ENCODE measurements at regions of chr13 and their contacts with region 1.

Region 1: GRCh38 chr13:93309886-93310523 is 83.4 kb downstream of the GPC6 start:
- DNase-seq: peak; percentile 51
- ATAC-seq: no peak
- H3K4me3 ChIP-seq: no peak overlapping the region
- H3K27ac ChIP-seq: no peak overlapping the region
- H3K4me1 ChIP-seq: peaks cover 2% of the 10 kb centered on the region; the same call in 1 of the 2 replicates
- H3K27me3 ChIP-seq: no peaks in the 10 kb centered on the region
- CTCF ChIP-seq: no peak
- POLR2A ChIP-seq: no peak
- RAD21 ChIP-seq: no peak

Region 2: DNA sequence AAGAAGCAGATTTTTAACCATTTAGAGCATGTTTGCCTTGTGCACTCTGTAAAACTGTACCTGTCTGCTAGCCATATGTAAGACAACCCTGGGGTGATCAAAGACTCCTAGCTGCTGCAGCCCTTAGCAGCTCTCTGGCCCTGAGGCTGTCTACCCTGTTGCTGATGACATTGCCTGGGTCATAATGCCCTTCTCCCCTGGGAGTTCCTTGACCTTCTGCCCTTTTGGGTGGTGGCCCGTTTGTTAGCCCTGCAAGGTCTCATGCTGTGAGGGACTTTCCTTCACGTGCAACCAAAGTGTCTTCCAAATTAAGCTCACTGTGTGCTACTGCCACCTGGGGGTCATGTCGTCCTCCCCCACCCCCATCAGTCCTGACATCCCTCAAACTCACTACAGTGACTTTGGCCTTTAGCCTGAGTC is 76.0 kb before region 1 on chr13:
- CTCF ChIA-PET with region 1: no interaction called
- POLR2A ChIA-PET with region 1: no interaction called
- dilution Hi-C with region 1: no loop called
- in situ Hi-C with region 1: no loop called
- intact Hi-C with region 1: no loop called
- DNase-seq: no peak
- ATAC-seq: no peak
- H3K4me3 ChIP-seq: no peak overlapping the region
- H3K27ac ChIP-seq: no peak overlapping the region
- H3K4me1 ChIP-seq: peaks cover 5% of the 10 kb centered on the region
- H3K27me3 ChIP-seq: no peaks in the 10 kb centered on the region
- CTCF ChIP-seq: no peak
- POLR2A ChIP-seq: no peak
- RAD21 ChIP-seq: no peak

Region 3: GRCh38 chr13:93248627-93249047 is 61.4 kb before region 1 on chr13:
- CTCF ChIA-PET with region 1: no interaction called
- POLR2A ChIA-PET with region 1: no interaction called
- dilution Hi-C with region 1: no loop called
- in situ Hi-C with region 1: no loop called
- intact Hi-C with region 1: loop called (anchors 10 kb)
- DNase-seq: peak; percentile 35
- ATAC-seq: no peak
- H3K4me3 ChIP-seq: no peak overlapping the region
- H3K27ac ChIP-seq: peak overlapping the region; percentile 38
- H3K4me1 ChIP-seq: peaks cover 14% of the 10 kb centered on the region
- H3K27me3 ChIP-seq: no peaks in the 10 kb centered on the region
- CTCF ChIP-seq: no peak; the same call in 1 of the 2 replicates
- POLR2A ChIP-seq: no peak
- RAD21 ChIP-seq: peak; percentile 49

Region 4: DNA sequence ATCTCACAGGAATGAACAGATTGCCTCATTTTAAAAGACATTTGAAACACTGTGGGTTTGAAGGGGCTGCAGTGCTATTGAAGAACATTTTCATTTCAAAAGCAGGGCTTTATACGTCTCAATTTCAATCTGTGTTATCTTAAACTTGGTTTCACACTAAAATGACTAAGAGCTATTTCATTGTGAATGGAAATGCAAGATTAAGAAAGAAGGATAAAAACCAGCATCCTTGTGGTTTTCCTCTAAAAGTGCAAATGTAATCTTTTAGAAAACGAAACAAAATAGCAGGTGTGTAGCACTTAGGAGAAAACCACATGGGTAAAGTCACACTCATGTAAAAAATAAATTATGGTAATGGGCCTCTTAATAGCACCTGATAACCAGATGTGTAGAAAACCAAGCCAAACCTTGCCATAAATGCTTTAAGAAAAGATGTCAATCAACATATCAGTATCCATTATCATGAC is 314.3 kb after region 1 on chr13:
- CTCF ChIA-PET with region 1: no interaction called
- POLR2A ChIA-PET with region 1: no interaction called
- dilution Hi-C with region 1: no loop called
- in situ Hi-C with region 1: no loop called
- intact Hi-C with region 1: no loop called
- DNase-seq: no peak
- ATAC-seq: no peak
- H3K4me3 ChIP-seq: no peak overlapping the region
- H3K27ac ChIP-seq: no peak overlapping the region
- H3K4me1 ChIP-seq: no peaks in the 10 kb centered on the region
- H3K27me3 ChIP-seq: no peaks in the 10 kb centered on the region
- CTCF ChIP-seq: no peak
- POLR2A ChIP-seq: no peak
- RAD21 ChIP-seq: no peak